PC-9 (cell line): ENCODE measurements at regions of chr5 and their contacts with region 1.

Region 1: GRCh38 chr5:59099270-59099994 is 516.6 kb downstream of the RAB3C start:
- DNase-seq: peak; percentile 2 to 41
- H3K4me3 ChIP-seq: no peak overlapping the region
- H3K27ac ChIP-seq: no peak overlapping the region
- H3K4me1 ChIP-seq: no peaks in the 10 kb centered on the region; the same call in 1 of the 2 replicates
- H3K27me3 ChIP-seq: no peaks in the 10 kb centered on the region
- CTCF ChIP-seq: no peak

Region 2: DNA sequence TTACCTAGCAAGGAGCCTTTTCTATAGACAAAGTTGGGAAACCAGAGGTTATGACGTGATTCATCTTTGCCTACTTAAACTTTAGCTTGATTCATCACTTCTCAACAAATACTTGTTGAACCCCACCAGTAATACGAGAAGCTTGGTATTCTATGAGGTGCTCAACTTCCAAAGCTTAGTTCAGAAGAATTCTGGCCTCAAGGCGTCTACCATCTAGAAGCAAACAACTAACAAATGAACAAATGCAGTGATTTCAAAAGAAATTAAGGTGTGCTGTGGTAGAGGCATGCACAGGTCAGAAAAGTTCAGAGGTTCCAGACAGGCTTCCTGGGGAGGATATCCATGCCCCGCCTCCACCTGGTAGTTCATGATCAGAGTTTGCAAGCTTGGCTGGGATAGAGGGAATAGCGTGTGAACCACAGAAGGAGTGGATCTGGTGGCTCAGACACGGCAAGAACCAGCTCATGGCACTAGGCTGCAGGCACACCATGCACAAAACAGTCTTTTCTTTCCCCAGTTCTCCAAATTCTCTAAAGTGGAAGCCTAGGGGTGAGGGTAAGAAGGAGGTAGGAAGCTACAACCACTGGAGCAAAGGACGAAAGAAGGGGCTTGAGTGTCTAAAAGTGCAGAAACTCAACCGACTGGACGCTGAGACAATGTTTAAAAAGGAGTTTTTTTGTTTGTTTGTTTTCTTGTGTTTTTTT is 43.5 kb before region 1 on chr5:
- CTCF ChIA-PET with region 1: interaction called, 13 read pairs
- POLR2A ChIA-PET with region 1: no interaction called
- intact Hi-C with region 1: no loop called
- DNase-seq: peak; percentile 40 to 90
- H3K4me3 ChIP-seq: no peak overlapping the region; the same call in 1 of the 2 replicates
- H3K27ac ChIP-seq: peak overlapping the region; percentile 77
- H3K4me1 ChIP-seq: peaks cover 25% of the 10 kb centered on the region
- H3K27me3 ChIP-seq: no peaks in the 10 kb centered on the region
- CTCF ChIP-seq: no peak